Activated B cell treated with CpG ODN at 0.5 μM for 24 hours (primary cell): ENCODE measurements at regions of chr7 and their contacts with region 1.

Region 1: GRCh38 chr7:50418086-50418515 is 32.0 kb downstream of the FIGNL1 start:
- DNase-seq: peak; percentile 47
- ATAC-seq: peak; percentile 82
- H3K4me3 Mint-ChIP-seq: no peak overlapping the region
- H3K27ac Mint-ChIP-seq: peak overlapping the region; percentile 35
- H3K4me1 Mint-ChIP-seq: peaks cover 51% of the 10 kb centered on the region
- H3K27me3 Mint-ChIP-seq: no peaks in the 10 kb centered on the region
- CTCF ChIP-seq: peak; percentile 56

Region 2: GRCh38 chr7:50119815-50120637 is 298.1 kb before region 1 on chr7:
- CTCF ChIA-PET with region 1: interaction called, 14 read pairs
- POLR2A ChIA-PET with region 1: no interaction called
- intact Hi-C with region 1: loop called (anchors 1 kb)
- DNase-seq: no peak
- ATAC-seq: peak; percentile 86
- H3K4me3 Mint-ChIP-seq: no peak overlapping the region
- H3K27ac Mint-ChIP-seq: peak overlapping the region; percentile 43
- H3K4me1 Mint-ChIP-seq: peaks cover 21% of the 10 kb centered on the region
- H3K27me3 Mint-ChIP-seq: no peaks in the 10 kb centered on the region
- CTCF ChIP-seq: no peak

Region 3: DNA sequence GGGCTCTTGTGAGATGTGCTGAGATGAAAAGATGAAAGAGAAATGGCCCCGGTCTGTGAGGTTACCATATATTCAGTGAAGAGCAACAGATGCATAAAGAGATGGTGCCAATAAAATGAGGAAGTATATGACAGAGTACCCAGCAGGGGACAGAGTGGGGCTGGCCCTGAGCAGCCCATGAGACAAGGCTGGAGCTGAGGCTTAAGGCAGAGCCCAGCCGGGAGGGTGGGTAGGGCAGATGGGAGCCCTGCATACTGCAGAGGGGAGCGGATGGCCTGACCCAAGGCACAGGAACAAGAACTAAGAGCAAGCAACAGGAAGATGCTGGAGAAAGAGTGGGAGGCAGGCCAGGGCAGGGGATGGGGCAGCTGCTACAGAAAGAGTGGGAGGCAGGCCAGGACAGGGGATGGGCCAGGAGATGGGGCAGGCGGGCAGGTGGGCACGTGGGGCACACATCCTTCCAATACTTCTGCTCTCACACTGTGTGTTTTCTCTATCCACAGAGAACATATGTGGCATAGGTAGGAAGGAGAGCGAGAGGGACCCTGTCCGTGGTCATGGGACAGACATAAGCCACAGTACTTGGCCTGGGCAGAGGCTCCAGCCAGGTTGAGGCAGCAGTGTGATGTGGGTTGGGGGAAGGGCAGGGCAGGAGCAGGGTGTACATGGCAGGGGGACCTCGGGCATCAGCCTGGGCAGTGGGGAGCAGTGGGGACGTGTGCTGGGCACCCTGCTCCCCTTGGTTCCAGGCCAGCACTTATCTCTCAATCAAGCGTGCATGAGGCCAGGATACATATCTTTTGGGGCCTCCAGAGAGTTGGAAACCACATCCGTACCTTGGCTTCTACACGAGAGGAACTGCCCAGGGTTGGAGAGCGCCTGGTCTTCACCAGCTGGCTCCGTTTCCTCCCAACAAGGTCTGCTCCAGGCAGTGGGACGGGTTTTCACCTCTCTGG is 205.2 kb before region 1 on chr7:
- CTCF ChIA-PET with region 1: interaction called, 7 read pairs
- POLR2A ChIA-PET with region 1: interaction called, 4 read pairs
- intact Hi-C with region 1: loop called (anchors 2 kb)
- DNase-seq: no peak
- ATAC-seq: peak; percentile 91
- H3K4me3 Mint-ChIP-seq: peak overlapping the region; percentile 70
- H3K27ac Mint-ChIP-seq: peak overlapping the region; percentile 84
- H3K4me1 Mint-ChIP-seq: peaks cover 63% of the 10 kb centered on the region
- H3K27me3 Mint-ChIP-seq: no peaks in the 10 kb centered on the region
- CTCF ChIP-seq: no peak

Region 4: DNA sequence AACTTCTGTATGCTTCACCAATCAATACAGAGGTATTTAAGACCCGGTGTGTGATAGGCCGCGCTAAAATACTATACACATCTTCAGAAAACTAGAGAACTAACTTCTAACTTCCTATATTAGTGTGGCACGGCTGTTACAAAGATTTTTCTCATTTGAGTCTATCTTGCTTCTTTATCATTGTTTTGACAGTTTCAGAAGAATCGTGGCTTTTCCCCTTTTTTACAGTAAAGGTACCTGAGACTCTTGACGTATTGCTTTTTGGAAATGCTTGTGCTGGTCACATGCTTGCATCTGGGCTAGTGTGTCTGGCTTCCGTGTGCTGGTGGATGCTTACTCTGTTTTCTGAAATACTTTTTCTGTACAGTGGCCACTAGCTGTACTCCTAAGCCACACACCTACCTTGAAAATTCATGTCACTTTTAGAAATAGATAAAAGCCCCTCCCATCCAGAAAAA is 100.9 kb before region 1 on chr7:
- CTCF ChIA-PET with region 1: interaction called, 11 read pairs
- POLR2A ChIA-PET with region 1: interaction called, 3 read pairs
- intact Hi-C with region 1: no loop called
- DNase-seq: no peak
- ATAC-seq: peak; percentile 63
- H3K4me3 Mint-ChIP-seq: peak overlapping the region; percentile 74
- H3K27ac Mint-ChIP-seq: peak overlapping the region; percentile 96
- H3K4me1 Mint-ChIP-seq: peaks cover 96% of the 10 kb centered on the region
- H3K27me3 Mint-ChIP-seq: no peaks in the 10 kb centered on the region
- CTCF ChIP-seq: no peak

Region 5: GRCh38 chr7:50369143-50370026 is 48.7 kb before region 1 on chr7:
- CTCF ChIA-PET with region 1: interaction called, 79 read pairs
- POLR2A ChIA-PET with region 1: interaction called, 3 read pairs
- intact Hi-C with region 1: loop called (anchors 1 kb)
- DNase-seq: no peak
- ATAC-seq: peak; percentile 66
- H3K4me3 Mint-ChIP-seq: no peak overlapping the region
- H3K27ac Mint-ChIP-seq: peak overlapping the region; percentile 74
- H3K4me1 Mint-ChIP-seq: peaks cover 94% of the 10 kb centered on the region
- H3K27me3 Mint-ChIP-seq: no peaks in the 10 kb centered on the region
- CTCF ChIP-seq: peak; percentile 50

Region 6: GRCh38 chr7:50397320-50397970 is 20.7 kb before region 1 on chr7:
- CTCF ChIA-PET with region 1: interaction called, 11 read pairs
- POLR2A ChIA-PET with region 1: interaction called, 7 read pairs
- intact Hi-C with region 1: no loop called
- DNase-seq: no peak
- ATAC-seq: peak; percentile 36
- H3K4me3 Mint-ChIP-seq: peak overlapping the region; percentile 45
- H3K27ac Mint-ChIP-seq: peak overlapping the region; percentile 93
- H3K4me1 Mint-ChIP-seq: peaks cover 79% of the 10 kb centered on the region
- H3K27me3 Mint-ChIP-seq: no peaks in the 10 kb centered on the region
- CTCF ChIP-seq: no peak